Caco-2 (cell line): ENCODE measurements at regions of chr2 and their contacts with region 1.

Region 1: DNA sequence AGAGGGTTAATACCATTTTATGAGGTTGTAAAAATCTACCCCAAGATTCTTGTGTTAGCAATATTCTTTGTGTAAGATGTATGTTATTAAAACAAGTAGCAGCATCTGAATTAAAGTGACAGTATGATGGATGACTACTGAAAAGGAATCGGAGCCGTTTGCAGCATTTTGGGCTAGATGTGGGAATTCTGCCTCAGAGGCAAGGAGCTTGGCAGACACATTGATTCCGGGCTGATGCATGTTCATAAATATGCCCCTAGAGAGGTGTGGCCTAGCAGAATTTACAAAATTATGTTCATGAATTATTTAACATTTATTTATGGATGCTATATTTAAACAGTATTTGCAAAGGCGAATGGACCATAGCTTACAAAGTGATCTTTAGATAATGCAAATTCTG is 389.0 kb upstream of the ETAA1 start:
- DNase-seq: no peak
- H3K4me3 ChIP-seq: no peak overlapping the region
- H3K4me3 Mint-ChIP-seq: no peak overlapping the region
- H3K27ac Mint-ChIP-seq: peak overlapping the region; percentile 90
- H3K4me1 ChIP-seq: peaks cover 21% of the 10 kb centered on the region
- H3K4me1 Mint-ChIP-seq: peaks cover 15% of the 10 kb centered on the region
- H3K27me3 ChIP-seq: no peaks in the 10 kb centered on the region
- H3K27me3 Mint-ChIP-seq: no peaks in the 10 kb centered on the region
- CTCF ChIP-seq: no peak

Region 2: DNA sequence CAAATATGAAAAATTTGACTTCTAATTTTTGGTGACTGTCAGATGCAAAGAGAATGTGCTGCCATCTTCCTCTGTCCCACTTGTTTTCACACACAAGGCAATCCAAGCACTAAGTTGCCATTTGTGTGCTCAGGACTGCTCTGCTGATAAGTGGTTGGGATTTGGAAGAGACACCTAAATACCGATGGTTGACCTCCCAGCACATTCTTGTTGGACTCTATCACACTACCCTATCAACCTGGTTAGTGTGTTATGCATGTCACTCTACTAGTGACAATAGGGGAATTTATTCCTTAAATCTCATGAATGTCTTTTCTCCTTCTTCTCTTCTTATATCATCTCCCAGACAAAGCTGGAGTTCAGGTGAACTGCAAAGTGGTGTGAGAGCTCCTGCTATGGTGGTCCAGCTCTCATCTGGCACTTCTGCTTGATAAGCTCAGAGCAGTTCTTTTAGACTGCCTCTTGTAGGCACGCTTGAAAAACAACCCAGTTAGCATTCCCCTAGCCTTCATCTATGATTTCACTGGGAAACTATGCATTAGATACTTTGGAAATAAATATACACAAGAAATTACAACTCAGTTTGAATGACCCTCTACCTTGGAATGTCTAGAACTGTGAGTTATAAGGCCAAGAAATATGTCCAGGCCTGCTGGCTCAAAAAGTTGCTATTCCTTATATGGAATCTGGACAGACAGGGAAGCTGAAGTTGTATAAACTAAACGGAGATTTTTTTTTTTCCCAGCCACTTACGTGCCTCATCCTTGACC is 168.4 kb before region 1 on chr2:
- CTCF ChIA-PET with region 1: no interaction called
- POLR2A ChIA-PET with region 1: no interaction called
- intact Hi-C with region 1: no loop called
- DNase-seq: peak in 1 of 2 experiments; percentile 5
- H3K4me3 ChIP-seq: no peak overlapping the region
- H3K4me3 Mint-ChIP-seq: no peak overlapping the region
- H3K27ac Mint-ChIP-seq: no peak overlapping the region
- H3K4me1 ChIP-seq: peaks cover 17% of the 10 kb centered on the region
- H3K4me1 Mint-ChIP-seq: peaks cover 7% of the 10 kb centered on the region
- H3K27me3 ChIP-seq: no peaks in the 10 kb centered on the region
- H3K27me3 Mint-ChIP-seq: no peaks in the 10 kb centered on the region
- CTCF ChIP-seq: no peak

Region 3: DNA sequence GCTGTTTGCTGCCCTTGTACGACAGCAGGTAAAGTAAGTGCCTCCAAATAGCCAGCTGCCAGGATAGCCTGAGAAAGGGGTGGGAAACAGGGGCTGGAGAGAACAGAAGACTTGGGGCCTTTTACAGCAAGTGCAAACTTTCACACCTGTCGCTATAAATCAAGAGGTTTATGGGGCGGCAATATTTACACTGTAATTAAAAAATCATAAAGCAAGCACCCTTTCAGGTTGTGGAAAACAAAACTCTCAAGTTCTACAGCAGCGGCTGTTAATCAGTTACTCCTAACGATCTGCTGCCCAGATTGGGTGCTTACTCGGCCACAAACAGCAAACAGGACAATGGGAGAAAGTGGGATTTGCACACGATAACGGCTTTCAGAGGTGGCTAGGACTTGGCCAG is 29.5 kb after region 1 on chr2:
- CTCF ChIA-PET with region 1: no interaction called
- POLR2A ChIA-PET with region 1: no interaction called
- intact Hi-C with region 1: loop called (anchors 1 kb)
- DNase-seq: peak; percentile 40 to 58
- H3K4me3 ChIP-seq: no peak overlapping the region
- H3K4me3 Mint-ChIP-seq: no peak overlapping the region
- H3K27ac Mint-ChIP-seq: no peak overlapping the region
- H3K4me1 ChIP-seq: peaks cover 42% of the 10 kb centered on the region
- H3K4me1 Mint-ChIP-seq: peaks cover 27% of the 10 kb centered on the region
- H3K27me3 ChIP-seq: no peaks in the 10 kb centered on the region
- H3K27me3 Mint-ChIP-seq: no peaks in the 10 kb centered on the region
- CTCF ChIP-seq: no peak

Region 4: DNA sequence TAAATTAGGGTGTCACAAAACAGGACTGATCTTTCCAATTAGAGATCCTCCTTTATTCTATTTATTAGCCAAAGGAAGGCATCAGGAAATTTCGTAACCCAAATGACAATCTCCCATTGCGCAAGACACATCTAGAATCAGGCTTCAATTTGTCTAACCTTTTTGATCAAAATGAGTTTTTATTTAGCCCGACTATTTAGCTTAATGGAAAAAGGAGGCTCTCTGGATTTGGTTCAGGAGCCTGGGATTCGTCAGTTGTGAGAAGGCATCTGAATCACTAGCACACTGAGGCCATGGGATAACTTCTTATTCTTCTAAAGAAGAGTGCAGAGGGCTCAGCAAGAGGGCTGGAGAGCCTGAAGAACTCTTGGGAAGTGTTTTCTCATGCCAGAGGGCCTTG is 56.9 kb after region 1 on chr2:
- CTCF ChIA-PET with region 1: no interaction called
- POLR2A ChIA-PET with region 1: no interaction called
- intact Hi-C with region 1: no loop called
- DNase-seq: no peak
- H3K4me3 ChIP-seq: no peak overlapping the region
- H3K4me3 Mint-ChIP-seq: no peak overlapping the region
- H3K27ac Mint-ChIP-seq: no peak overlapping the region
- H3K4me1 ChIP-seq: no peaks in the 10 kb centered on the region
- H3K4me1 Mint-ChIP-seq: no peaks in the 10 kb centered on the region
- H3K27me3 ChIP-seq: no peaks in the 10 kb centered on the region
- H3K27me3 Mint-ChIP-seq: peaks cover 3% of the 10 kb centered on the region
- CTCF ChIP-seq: no peak

Region 5: DNA sequence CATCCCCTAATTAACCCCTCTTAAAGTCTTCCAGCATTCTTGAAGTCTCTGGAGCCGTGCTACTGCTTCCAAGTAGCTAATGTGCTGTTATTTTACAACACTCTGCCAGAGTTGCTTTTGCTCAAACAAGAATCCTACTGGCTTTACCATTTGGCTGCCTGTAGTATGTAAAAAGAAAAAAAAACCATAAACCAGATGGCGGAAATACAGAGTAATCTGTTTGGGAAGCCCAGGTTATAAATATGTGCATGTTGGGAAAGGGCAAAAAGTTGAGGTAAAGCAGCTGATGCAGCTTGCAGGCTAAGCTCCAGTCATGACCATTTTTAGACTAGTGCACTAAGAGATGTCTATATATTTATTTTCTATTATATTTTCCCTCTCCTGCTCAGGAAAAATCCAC is 75.8 kb after region 1 on chr2:
- CTCF ChIA-PET with region 1: no interaction called
- POLR2A ChIA-PET with region 1: no interaction called
- intact Hi-C with region 1: loop called (anchors 1 kb)
- DNase-seq: no peak
- H3K4me3 ChIP-seq: no peak overlapping the region
- H3K4me3 Mint-ChIP-seq: no peak overlapping the region
- H3K27ac Mint-ChIP-seq: peak overlapping the region; percentile 66
- H3K4me1 ChIP-seq: peaks cover 19% of the 10 kb centered on the region
- H3K4me1 Mint-ChIP-seq: peaks cover 18% of the 10 kb centered on the region
- H3K27me3 ChIP-seq: no peaks in the 10 kb centered on the region
- H3K27me3 Mint-ChIP-seq: no peaks in the 10 kb centered on the region
- CTCF ChIP-seq: no peak